GM10248 (cell line): ENCODE measurements at regions of chr11 and their contacts with region 1.

Region 1: GRCh38 chr11:123246749-123247495 is 51.9 kb upstream of the CLMP start:
- DNase-seq: peak; percentile 82
- CTCF ChIP-seq: peak; percentile 89

Region 2: DNA sequence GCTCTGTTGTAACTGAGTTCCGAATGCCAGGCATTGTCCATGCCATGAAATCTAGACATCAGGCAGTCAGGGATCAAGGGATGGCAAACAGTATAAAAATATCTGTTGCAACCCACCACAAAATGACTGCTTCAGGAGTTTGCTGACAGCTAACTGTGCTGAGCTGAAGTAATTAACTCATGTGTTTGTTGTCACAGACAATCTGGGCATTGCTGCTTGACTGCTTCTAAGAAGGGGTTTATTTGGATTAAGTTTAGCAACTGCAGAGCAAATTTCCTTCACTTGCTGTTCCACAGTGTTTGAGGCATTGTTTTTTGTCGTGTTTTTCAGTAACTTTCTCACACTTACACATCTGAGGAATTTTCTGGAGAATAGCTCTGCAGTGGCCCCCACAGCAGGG is 295.7 kb before region 1 on chr11:
- CTCF ChIA-PET with region 1: no interaction called
- POLR2A ChIA-PET with region 1: no interaction called
- DNase-seq: no peak
- CTCF ChIP-seq: no peak

Region 3: GRCh38 chr11:123103326-123103980 is 143.5 kb before region 1 on chr11:
- CTCF ChIA-PET with region 1: interaction called, 94 read pairs
- POLR2A ChIA-PET with region 1: no interaction called
- DNase-seq: no peak
- CTCF ChIP-seq: peak; percentile 44

Region 4: DNA sequence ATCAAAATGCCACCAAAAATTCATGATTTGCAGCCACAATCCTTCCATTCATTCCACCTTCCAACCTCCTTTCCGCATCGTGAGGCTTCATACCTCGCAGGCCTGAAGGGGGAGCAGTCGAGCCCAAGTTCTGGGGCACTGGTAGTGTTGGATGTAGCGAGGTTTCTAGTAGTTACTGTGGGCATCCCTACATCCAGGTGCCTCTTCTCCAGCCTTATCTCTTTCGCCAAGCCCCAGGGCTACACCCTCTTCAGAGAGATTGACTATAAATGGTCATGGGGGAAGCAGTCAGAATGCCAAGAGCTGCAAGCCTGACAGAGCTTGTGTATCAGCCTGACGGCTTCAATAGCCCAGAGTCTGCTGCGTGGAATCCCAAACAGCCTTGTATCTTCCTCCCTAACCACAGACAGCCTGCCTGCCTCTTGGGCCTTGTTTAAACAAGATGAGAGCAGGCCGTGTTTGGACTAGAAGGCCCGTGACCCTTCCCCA is 80.8 kb before region 1 on chr11:
- CTCF ChIA-PET with region 1: interaction called, 33 read pairs
- POLR2A ChIA-PET with region 1: no interaction called
- DNase-seq: no peak
- CTCF ChIP-seq: peak; percentile 56

Region 5: GRCh38 chr11:123216243-123216642 is 30.7 kb before region 1 on chr11:
- CTCF ChIA-PET with region 1: interaction called, 11 read pairs
- POLR2A ChIA-PET with region 1: no interaction called
- DNase-seq: no peak
- CTCF ChIP-seq: no peak

Region 6: DNA sequence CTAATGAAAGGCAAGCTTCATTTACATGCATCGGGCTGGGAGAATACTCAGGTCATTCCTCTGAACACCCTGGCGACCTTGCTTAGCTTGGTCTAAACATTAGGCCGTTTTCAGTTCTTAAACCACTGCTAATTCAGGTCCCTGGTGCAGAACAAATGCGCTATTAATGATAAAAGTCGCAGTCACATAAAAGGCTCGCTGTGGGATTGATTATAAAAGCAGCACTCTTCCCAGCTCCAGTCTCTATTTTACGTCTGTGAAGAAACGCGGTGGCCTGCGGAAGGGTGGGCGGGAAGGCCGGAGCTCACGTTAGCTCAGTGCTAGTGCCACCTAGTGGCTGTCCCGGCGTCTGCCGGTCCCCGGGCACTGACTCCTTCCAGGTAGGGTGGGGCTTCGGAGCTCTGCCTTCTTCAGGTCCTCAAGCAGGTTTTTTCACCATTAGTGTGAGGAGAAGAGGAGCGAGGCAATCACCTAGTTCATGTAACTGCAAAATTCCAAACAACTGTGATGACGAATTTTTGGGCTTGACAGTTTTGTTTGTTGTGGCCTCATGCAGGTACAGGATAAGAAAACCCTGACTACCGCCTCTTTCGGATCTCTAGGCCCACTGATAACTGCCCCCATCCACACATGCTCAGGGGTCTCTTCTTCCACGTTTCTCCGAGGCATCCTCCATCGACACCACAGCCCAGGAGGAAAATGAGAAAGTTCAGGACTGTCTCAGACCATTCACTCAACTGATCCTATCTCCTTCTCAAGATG is 14.6 kb after region 1 on chr11:
- CTCF ChIA-PET with region 1: interaction called, 88 read pairs
- POLR2A ChIA-PET with region 1: no interaction called
- DNase-seq: peak; percentile 76
- CTCF ChIP-seq: peak; percentile 89

Region 7: GRCh38 chr11:123478352-123478987 is 231.5 kb after region 1 on chr11:
- CTCF ChIA-PET with region 1: interaction called, 19 read pairs
- POLR2A ChIA-PET with region 1: no interaction called
- DNase-seq: peak; percentile 53
- CTCF ChIP-seq: peak; percentile 42

Region 8: GRCh38 chr11:123707606-123708205 is 460.8 kb after region 1 on chr11:
- CTCF ChIA-PET with region 1: no interaction called
- POLR2A ChIA-PET with region 1: no interaction called
- DNase-seq: peak; percentile 57
- CTCF ChIP-seq: peak; percentile 81